Common myeloid progenitor, CD34-positive (primary cell): ENCODE measurements at regions of chr11 and their contacts with region 1.

Region 1: GRCh38 chr11:78432058-78432515 is 14.5 kb upstream of the GAB2 start:
- DNase-seq: peak in 1 of 3 donors; percentile 40
- H3K4me3 ChIP-seq: no peak overlapping the region
- H3K27ac ChIP-seq: no peak overlapping the region
- H3K4me1 ChIP-seq: peaks cover 28 to 36% (median 33%) of the 10 kb centered on the region in 4 experiments
- H3K27me3 ChIP-seq: no peaks in the 10 kb centered on the region

Region 2: GRCh38 chr11:78228467-78228866 is 203.6 kb before region 1 on chr11:
- CTCF ChIA-PET with region 1: interaction called, 14 read pairs
- POLR2A ChIA-PET with region 1: interaction called, 4 read pairs
- DNase-seq: peak; percentile 77 to 88 (median 87)
- H3K4me3 ChIP-seq: no peak overlapping the region
- H3K27ac ChIP-seq: no peak overlapping the region
- H3K4me1 ChIP-seq: peaks cover 2 to 22% (median 11%) of the 10 kb centered on the region in 4 experiments
- H3K27me3 ChIP-seq: no peaks in the 10 kb centered on the region

Region 3: GRCh38 chr11:78416305-78417178 is 15.5 kb before region 1 on chr11:
- CTCF ChIA-PET with region 1: interaction called, 130 read pairs
- POLR2A ChIA-PET with region 1: interaction called, 54 read pairs
- DNase-seq: peak; percentile 92 to 95 (median 94)
- H3K4me3 ChIP-seq: peak overlapping the region; percentile 63 to 91 (median 81)
- H3K27ac ChIP-seq: peak overlapping the region; percentile 72 to 88
- H3K4me1 ChIP-seq: peaks cover 20 to 57% (median 51%) of the 10 kb centered on the region in 4 experiments
- H3K27me3 ChIP-seq: no peaks in the 10 kb centered on the region

Region 4: DNA sequence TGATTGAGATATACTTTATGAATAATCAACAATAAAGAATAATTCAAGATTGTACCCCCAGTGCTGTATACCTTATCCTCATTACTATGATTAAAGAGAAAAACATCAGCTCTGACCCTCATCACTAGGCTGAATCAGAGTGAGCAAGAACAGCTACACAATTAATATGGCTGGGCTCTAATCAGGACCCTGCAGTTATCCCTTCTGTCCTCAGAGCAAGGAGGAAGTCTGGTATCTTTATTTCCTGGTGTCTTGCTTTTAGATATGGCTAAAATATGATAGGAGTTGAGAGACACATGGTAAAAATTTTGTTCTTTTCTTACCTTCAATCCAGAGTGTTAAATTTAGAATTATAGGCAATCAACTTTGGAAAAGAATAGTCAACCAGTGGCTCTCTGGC is 14.1 kb after region 1 on chr11:
- CTCF ChIA-PET with region 1: interaction called, 16 read pairs
- POLR2A ChIA-PET with region 1: no interaction called
- DNase-seq: peak in 2 of 3 donors; percentile 37 to 63
- H3K4me3 ChIP-seq: no peak overlapping the region
- H3K27ac ChIP-seq: no peak overlapping the region
- H3K4me1 ChIP-seq: peaks cover 4 to 11% (median 6%) of the 10 kb centered on the region in 4 experiments
- H3K27me3 ChIP-seq: no peaks in the 10 kb centered on the region